HEK293T (cell line): ENCODE measurements at regions of chr19 and their contacts with region 1.

Region 1: GRCh38 chr19:12757544-12758274 is 6.1 kb downstream of the BEST2 start:
- DNase-seq: peak; percentile 88

Region 2: GRCh38 chr19:12736995-12737834 is 20.5 kb before region 1 on chr19 and contains the start of gene GET3:
- CTCF ChIA-PET with region 1: interaction called, 8 read pairs
- POLR2A ChIA-PET with region 1: interaction called, 15 read pairs
- DNase-seq: peak; percentile 91

Region 3: DNA sequence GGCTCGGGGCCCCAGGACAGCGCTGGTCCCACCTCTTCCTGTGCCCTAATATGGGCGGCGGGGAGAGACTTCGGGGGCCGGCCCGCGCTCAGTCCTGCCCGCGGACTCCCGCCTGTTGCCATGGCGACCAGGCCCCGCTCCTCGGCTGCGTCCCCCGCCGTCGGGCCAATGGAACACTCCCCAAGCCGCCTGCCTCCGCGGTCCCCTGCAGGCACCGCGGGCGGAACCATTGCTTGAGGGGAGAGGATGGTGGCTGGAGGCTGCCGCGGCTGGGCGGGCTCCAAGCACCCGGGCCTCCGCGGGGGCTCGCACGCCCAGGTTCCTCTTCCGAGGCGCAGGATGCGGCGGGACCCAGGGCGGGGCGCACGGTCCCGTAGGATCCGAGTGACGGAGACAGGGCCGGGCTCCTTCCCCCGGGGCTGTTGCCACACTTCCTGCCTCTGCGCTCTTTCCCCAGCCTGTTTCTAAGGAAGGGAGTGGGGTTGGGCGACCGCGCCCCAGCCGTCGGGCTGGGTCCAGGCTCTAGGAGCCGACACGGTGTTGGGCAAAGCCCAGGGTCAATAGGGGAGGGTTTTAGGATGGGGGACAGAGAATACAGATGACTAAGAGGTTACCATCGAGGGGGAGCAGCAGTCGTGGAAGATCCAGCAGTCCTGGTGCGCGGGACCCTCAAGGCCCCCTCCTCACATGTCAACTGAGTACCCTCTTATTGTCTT is 32.4 kb after region 1 on chr19:
- CTCF ChIA-PET with region 1: interaction called, 15 read pairs
- POLR2A ChIA-PET with region 1: interaction called, 3 read pairs
- DNase-seq: peak; percentile 77

Region 4: GRCh38 chr19:12796146-12797071 is 38.7 kb after region 1 on chr19:
- CTCF ChIA-PET with region 1: interaction called, 15 read pairs
- POLR2A ChIA-PET with region 1: interaction called, 3 read pairs
- DNase-seq: peak; percentile 63

Region 5: DNA sequence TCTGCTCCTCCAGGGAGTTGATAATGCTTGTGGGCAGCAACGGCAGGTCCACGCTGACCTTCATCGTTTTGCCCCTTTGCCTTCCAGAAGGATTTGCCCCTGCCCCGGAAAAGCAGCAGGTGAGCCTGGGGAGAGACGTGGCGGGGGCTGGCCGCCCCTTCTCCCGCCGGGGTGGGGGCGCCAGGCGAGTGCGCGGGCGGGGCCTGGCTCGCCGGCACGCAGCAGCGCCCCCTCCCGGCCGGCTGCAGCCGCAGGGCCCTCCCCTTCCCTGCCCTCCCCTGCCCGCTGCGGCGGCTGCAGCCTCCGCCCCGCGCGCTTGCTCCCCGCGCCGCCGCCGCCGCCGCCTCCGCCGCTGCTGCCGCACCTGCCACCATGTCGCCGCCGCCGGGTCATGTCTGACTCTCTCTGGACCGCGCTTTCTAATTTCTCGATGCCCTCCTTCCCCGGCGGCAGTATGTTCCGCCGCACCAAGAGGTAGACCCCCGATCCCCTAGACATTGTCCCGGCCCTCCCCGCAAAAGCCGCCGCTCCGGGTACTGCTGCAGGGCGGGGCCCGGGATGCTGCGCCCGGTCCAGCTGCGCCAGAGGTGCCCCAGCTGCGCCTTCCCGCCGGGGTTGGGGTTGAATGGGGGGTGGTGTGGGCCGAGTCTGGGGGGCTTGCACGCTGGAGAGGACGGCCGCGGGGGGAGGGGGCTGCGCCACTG is 80.6 kb after region 1 on chr19 and contains the start of gene MAST1:
- CTCF ChIA-PET with region 1: no interaction called
- POLR2A ChIA-PET with region 1: no interaction called
- DNase-seq: peak; percentile 80